ENCODE measurements at regions of chr7 and their contacts with region 1.

Region 1: GRCh38 chr7:111741811-111742240 is 179.5 kb upstream of the IMMP2L start:
- DNase-seq: peak; percentile 61
- CTCF ChIP-seq: peak; percentile 68

Region 2: GRCh38 chr7:110943701-110944345 is 798.0 kb before region 1 on chr7:
- in situ Hi-C with region 1: no loop called
- DNase-seq: no peak
- CTCF ChIP-seq: no peak

Region 3: GRCh38 chr7:111098011-111098925 is 643.6 kb before region 1 on chr7:
- in situ Hi-C with region 1: loop called (anchors 25 kb)
- DNase-seq: no peak
- CTCF ChIP-seq: peak; percentile 65

Region 4: GRCh38 chr7:111329367-111330234 is 412.2 kb before region 1 on chr7:
- in situ Hi-C with region 1: loop called (anchors 25 kb)
- DNase-seq: peak; percentile 1
- CTCF ChIP-seq: peak; percentile 23

Region 5: GRCh38 chr7:111486472-111487142 is 255.2 kb before region 1 on chr7:
- in situ Hi-C with region 1: loop called (anchors 25 kb)
- DNase-seq: peak; percentile 50
- CTCF ChIP-seq: peak; percentile 68

Region 6: GRCh38 chr7:112898432-112899290 is 1156.8 kb after region 1 on chr7:
- in situ Hi-C with region 1: loop called (anchors 25 kb)
- DNase-seq: peak; percentile 39
- CTCF ChIP-seq: peak; percentile 81